ENCODE measurements at regions of chr1 and their contacts with region 1.

Region 1: DNA sequence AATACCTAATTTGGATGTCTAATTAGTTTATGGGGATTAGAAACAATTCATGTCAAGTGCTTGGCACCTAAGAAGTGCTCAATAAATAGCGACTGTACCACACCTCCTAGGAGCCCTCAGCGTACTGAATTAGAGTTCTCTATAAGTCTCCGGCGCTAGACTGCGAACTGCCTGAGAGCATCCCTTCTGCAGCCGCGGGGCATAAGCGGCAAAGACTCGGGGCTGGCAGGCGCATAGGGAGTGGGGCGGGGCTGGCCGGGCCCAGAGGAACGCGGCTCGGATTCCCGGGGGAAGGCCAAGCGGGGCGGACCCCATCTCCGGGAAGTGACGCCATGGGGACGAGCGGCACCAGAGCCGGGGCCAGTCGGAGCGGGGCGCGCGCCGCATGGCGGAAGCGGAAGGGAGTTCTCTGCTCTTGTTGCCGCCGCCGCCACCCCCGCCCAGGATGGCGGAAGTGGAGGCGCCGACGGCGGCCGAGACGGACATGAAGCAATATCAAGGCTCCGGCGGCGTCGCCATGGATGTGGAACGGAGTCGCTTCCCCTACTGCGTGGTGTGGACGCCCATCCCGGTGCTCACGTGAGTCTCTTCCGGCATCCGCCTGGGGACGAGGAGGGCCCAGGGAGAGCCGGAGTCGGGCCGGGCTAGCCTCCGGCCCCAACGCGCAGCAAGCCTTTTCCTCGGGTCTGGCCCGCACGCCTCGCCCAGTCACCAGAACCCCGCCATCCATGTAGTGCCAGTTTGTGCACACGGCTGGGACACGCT is at the start of gene TMEM222:
- DNase-seq: peak; percentile 99
- ATAC-seq: peak; percentile 99
- H3K4me3 ChIP-seq: peak within 1 kb of the TSS; percentile 99
- H3K27ac ChIP-seq: peak within 1 kb of the TSS; percentile 93
- H3K4me1 ChIP-seq: peaks cover 27% of the 10 kb centered on the region
- H3K27me3 ChIP-seq: peaks cover 0 to 19% (median 0%) of the 10 kb centered on the region in 3 donors
- CTCF ChIP-seq: peak; percentile 17
- total RNA-seq, gene TMEM222: 20.7 to 35.0 (median 23.8) TPM

Region 2: DNA sequence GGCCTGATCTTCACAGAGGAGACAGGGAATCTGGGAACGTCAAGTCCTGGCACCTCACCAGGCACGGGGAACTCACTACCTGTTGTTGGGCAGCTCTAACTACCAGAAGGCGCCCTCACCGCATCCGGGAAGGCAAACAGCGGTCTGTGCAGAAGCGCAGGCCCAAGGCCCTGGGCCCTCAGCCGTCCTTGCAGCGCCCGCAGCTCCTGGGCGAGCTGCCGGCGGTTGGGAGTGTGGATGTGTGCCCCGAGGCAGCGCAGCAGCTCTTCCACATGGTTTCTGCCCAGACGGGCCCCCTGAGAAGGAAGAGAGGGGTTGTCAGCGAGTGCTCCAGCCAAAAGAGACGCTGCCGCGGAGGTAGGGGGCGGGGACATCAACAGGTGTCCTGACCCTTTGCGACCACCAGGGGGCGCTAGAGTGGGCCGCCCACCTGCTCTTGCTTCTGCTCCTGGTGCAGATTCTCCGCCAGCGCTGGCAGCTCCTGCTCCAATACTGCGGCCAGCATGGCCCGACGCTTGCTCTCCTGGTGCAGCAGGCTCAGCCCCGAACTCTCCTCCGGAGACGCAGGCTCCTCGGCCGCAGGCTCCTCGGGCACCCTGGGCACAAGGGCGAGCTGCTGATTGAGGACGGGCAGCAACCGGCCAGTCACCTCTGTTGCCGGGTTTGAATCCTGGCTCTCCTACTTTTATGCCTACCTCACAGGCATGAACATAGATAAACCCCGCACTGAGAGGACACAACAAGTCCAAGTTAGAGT is 35.5 kb after region 1 on chr1:
- intact Hi-C with region 1: loop called (anchors 5 kb)
- DNase-seq: peak; percentile 77 to 88
- ATAC-seq: peak; percentile 82 to 95 (median 90)
- H3K4me3 ChIP-seq: peak overlapping the region; percentile 25
- H3K27ac ChIP-seq: no peak overlapping the region
- H3K4me1 ChIP-seq: no peaks in the 10 kb centered on the region
- H3K27me3 ChIP-seq: no peaks in the 10 kb centered on the region
- CTCF ChIP-seq: peak; percentile 97